ENCODE measurements at regions of chr14 and their contacts with region 1.

Region 1: DNA sequence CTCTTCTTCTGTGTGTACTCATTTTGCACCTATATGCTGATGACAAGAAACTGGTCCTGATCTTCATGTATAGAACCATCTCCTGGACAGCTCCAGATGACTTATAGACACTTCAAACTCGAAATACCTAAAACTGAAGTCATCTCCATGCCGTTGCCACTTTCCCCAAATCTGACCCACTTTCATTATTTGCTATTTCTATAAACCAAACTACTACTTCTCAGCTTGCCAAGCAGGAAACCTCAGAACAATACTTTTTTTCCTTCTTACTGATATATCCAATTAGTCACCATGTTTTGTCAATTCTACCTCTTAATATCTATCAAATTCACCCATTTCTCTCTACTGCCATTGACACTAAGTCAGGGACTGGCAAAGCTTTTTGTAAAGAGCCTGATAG is 14.8 kb downstream of the SGPP1 start:
- DNase-seq: no peak
- ATAC-seq: no peak
- H3K4me3 Mint-ChIP-seq: peak overlapping the region; percentile 5
- H3K27ac Mint-ChIP-seq: peak overlapping the region; percentile 74
- H3K4me1 Mint-ChIP-seq: peaks cover 19% of the 10 kb centered on the region
- H3K27me3 Mint-ChIP-seq: no peaks in the 10 kb centered on the region

Region 2: DNA sequence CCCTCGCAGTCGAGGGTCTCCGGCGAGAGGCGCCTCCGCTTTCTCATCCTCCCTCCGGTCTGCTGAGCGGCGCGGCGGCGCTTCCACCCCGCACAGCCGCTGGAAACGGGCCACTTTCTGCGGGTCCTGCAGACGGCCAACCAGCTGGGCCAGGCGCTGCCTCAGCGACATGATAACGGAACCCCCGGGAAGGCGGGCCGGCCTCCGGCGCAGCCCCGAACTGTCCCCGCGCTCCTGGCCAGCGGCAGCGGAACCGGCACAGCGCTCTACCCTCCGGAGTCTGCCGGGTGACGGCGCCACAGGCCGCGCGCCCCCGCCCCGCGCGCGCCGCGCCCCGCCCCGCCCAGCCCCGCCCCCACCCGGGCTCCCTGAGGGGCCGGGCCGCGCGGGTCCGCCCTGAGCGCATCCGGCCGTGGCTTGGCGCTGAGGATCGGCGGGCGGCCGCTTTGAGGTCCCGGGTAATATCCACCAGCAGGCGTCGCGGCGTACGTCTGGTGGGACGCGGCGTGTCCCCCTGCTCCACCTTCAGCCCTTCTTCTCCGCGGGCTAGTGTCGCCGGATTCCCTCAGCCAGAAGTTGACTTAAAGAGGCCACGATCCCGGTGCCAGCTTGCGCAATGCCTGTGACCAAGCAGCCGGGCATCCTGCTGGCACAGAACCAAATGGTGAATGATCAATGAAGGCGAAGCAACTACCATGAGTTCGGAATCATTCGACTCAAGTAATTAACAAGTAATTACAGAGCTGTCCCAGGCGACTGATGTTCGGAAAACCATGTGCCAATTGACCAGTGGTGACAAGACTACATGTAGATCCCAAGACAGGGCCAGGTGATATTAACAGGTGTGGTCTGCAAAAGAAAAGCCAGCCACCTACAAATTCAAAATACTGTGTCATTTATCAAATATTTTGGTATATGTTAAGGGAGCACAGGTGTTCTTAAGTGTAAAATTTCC is 15.0 kb after region 1 on chr14 and contains the start of gene SGPP1:
- POLR2A ChIA-PET with region 1: interaction called, 10 read pairs
- DNase-seq: peak; percentile 89
- ATAC-seq: peak; percentile 93
- H3K4me3 Mint-ChIP-seq: peak within 1 kb of the TSS; percentile 99
- H3K27ac Mint-ChIP-seq: peak within 1 kb of the TSS; percentile 99
- H3K4me1 Mint-ChIP-seq: peaks cover 25% of the 10 kb centered on the region
- H3K27me3 Mint-ChIP-seq: peaks cover 3% of the 10 kb centered on the region
- total RNA-seq, gene SGPP1: 14.7 to 15.7 TPM

Measured in activated naive CD8-positive, alpha-beta T cell treated with anti-CD3 and anti-CD28 coated beads, Interleukin-2, amount 10 ng/mL, durations not matched to agents 7 days and 5 days (primary cell).